ENCODE measurements at regions of chr1 and their contacts with region 1.

Region 1: GRCh38 chr1:85612704-85613361 is 32.3 kb downstream of the CCN1 start:
- DNase-seq: peak; percentile 49
- H3K4me3 ChIP-seq: no peak overlapping the region
- H3K27ac ChIP-seq: peak overlapping the region; percentile 85
- H3K4me1 ChIP-seq: peaks cover 37% of the 10 kb centered on the region
- H3K27me3 ChIP-seq: no peaks in the 10 kb centered on the region
- CTCF ChIP-seq: peak; percentile 71 to 83

Region 2: GRCh38 chr1:85569122-85569521 is 43.7 kb before region 1 on chr1:
- CTCF ChIA-PET with region 1: no interaction called
- dilution Hi-C with region 1: no loop called
- in situ Hi-C with region 1: no loop called
- intact Hi-C with region 1: no loop called
- DNase-seq: peak; percentile 59
- H3K4me3 ChIP-seq: no peak overlapping the region
- H3K27ac ChIP-seq: no peak overlapping the region
- H3K4me1 ChIP-seq: peaks cover 58% of the 10 kb centered on the region
- H3K27me3 ChIP-seq: no peaks in the 10 kb centered on the region
- CTCF ChIP-seq: no peak

Region 3: GRCh38 chr1:85581802-85582686 is 30.8 kb before region 1 on chr1:
- CTCF ChIA-PET with region 1: no interaction called
- dilution Hi-C with region 1: no loop called
- in situ Hi-C with region 1: no loop called
- intact Hi-C with region 1: loop called (anchors 1 kb)
- DNase-seq: peak; percentile 72
- H3K4me3 ChIP-seq: peak overlapping the region; percentile 86 to 95 (median 92)
- H3K27ac ChIP-seq: peak overlapping the region; percentile 86
- H3K4me1 ChIP-seq: peaks cover 40% of the 10 kb centered on the region
- H3K27me3 ChIP-seq: no peaks in the 10 kb centered on the region
- CTCF ChIP-seq: peak; percentile 59 to 63

Region 4: DNA sequence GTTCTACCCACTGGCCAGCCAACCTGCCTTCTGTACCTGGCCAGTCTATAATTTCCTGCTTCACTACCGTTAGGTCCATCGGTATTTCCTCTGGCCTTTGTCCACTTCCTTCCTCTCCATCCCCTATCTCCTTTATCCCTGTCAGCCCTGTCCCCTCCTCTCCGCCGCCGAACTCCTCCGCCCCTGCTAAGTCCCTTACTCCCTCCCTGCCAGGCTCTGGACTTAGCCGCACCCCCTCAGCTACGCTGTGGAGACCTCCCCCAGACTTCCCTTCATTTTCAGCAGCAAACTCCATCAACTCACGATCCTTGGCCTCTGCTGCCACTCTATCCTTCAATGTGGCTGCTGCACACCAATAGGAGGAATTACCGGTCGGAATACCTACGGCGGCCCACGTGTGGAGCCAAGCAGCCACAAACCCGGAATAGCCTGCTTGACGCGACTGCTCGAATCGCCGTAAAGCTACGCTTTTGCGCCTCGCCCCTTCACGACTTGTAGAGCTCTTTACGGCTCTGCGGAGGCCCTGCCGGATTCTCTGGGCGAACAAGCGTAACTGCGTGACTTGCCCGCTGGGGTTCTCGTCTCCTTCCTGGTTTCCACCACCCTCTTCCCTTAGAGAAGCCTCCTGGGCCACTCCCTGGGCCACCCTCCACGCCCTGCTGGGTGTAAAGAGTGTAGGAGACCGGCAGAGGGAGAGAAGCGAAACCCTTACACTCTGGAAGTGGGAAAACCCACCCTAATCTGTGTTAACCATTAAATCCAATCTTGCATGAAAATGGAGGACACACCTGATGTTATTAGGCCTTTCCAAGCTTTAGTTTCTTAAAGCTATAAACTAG is 95.4 kb after region 1 on chr1 and contains the start of gene ZNHIT6:
- CTCF ChIA-PET with region 1: no interaction called
- dilution Hi-C with region 1: no loop called
- in situ Hi-C with region 1: no loop called
- intact Hi-C with region 1: loop called (anchors 5 kb)
- DNase-seq: peak; percentile 96
- H3K4me3 ChIP-seq: peak within 1 kb of the TSS; percentile 87 to 99 (median 88)
- H3K27ac ChIP-seq: peak within 1 kb of the TSS; percentile 53
- H3K4me1 ChIP-seq: peaks cover 12% of the 10 kb centered on the region
- H3K27me3 ChIP-seq: no peaks in the 10 kb centered on the region
- CTCF ChIP-seq: peak in 1 of 2 donors; percentile 42
- total RNA-seq, gene ZNHIT6: 8.5 to 22.5 TPM

Region 5: GRCh38 chr1:85839459-85839858 is 226.6 kb after region 1 on chr1:
- CTCF ChIA-PET with region 1: no interaction called
- dilution Hi-C with region 1: no loop called
- in situ Hi-C with region 1: no loop called
- intact Hi-C with region 1: no loop called
- DNase-seq: no peak
- H3K4me3 ChIP-seq: no peak overlapping the region
- H3K27ac ChIP-seq: no peak overlapping the region
- H3K4me1 ChIP-seq: no peaks in the 10 kb centered on the region
- H3K27me3 ChIP-seq: peaks cover 2% of the 10 kb centered on the region
- CTCF ChIP-seq: peak in 1 of 2 donors; percentile 12

Region 6: DNA sequence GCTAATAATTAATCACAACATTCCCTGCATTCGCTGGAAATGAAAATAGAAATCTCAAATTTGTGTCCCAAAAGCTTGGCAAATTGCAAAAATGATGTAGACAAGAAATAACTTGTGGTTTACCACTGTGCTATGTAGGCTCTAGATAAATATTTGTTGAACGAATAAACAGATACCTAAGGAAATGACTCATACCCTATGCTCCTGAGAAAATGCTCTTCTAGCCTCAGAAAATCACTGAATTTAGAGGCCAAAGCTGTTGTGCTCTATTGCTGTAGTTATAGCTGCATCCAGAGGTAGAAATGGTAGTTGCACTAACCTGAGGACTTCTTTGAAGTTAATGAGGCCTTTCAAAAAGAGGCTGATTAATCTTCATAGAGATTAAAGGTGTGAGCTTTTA is 237.4 kb after region 1 on chr1:
- CTCF ChIA-PET with region 1: no interaction called
- dilution Hi-C with region 1: no loop called
- in situ Hi-C with region 1: no loop called
- intact Hi-C with region 1: loop called (anchors 1 kb)
- DNase-seq: peak; percentile 79
- H3K4me3 ChIP-seq: no peak overlapping the region
- H3K27ac ChIP-seq: no peak overlapping the region
- H3K4me1 ChIP-seq: peaks cover 13% of the 10 kb centered on the region
- H3K27me3 ChIP-seq: peaks cover 12% of the 10 kb centered on the region
- CTCF ChIP-seq: peak in 1 of 2 donors; percentile 50

Region 7: GRCh38 chr1:85884372-85885035 is 271.7 kb after region 1 on chr1:
- CTCF ChIA-PET with region 1: no interaction called
- dilution Hi-C with region 1: no loop called
- in situ Hi-C with region 1: no loop called
- intact Hi-C with region 1: loop called (anchors 10 kb)
- DNase-seq: no peak
- H3K4me3 ChIP-seq: no peak overlapping the region
- H3K27ac ChIP-seq: no peak overlapping the region
- H3K4me1 ChIP-seq: no peaks in the 10 kb centered on the region
- H3K27me3 ChIP-seq: no peaks in the 10 kb centered on the region
- CTCF ChIP-seq: peak; percentile 39 to 63

Measured in mammary epithelial cell (primary cell).